B cell (primary cell): ENCODE measurements at regions of chr9 and their contacts with region 1.

Region 1: GRCh38 chr9:89278997-89279739 is 31.8 kb upstream of the CKS2 start:
- DNase-seq: peak; percentile 47
- ATAC-seq: peak; percentile 24
- H3K4me3 ChIP-seq: no peak overlapping the region
- H3K4me3 Mint-ChIP-seq: no peak overlapping the region
- H3K27ac ChIP-seq: no peak overlapping the region
- H3K27ac Mint-ChIP-seq: no peak overlapping the region
- H3K4me1 ChIP-seq: no peaks in the 10 kb centered on the region
- H3K4me1 Mint-ChIP-seq: no peaks in the 10 kb centered on the region
- H3K27me3 ChIP-seq: no peaks in the 10 kb centered on the region
- H3K27me3 Mint-ChIP-seq: peaks cover 4% of the 10 kb centered on the region
- CTCF ChIP-seq: peak; percentile 79

Region 2: GRCh38 chr9:88593537-88594185 is 685.5 kb before region 1 on chr9:
- CTCF ChIA-PET with region 1: interaction called, 4 read pairs
- POLR2A ChIA-PET with region 1: no interaction called
- intact Hi-C with region 1: loop called (anchors 5 kb)
- DNase-seq: peak; percentile 64
- ATAC-seq: no peak
- H3K4me3 ChIP-seq: no peak overlapping the region
- H3K4me3 Mint-ChIP-seq: no peak overlapping the region
- H3K27ac ChIP-seq: no peak overlapping the region
- H3K27ac Mint-ChIP-seq: no peak overlapping the region
- H3K4me1 ChIP-seq: peaks cover 9 to 13% of the 10 kb centered on the region in 2 donors
- H3K4me1 Mint-ChIP-seq: peaks cover 11% of the 10 kb centered on the region
- H3K27me3 ChIP-seq: peaks cover 0 to 2% (median 0%) of the 10 kb centered on the region in 4 experiments
- H3K27me3 Mint-ChIP-seq: peaks cover 8% of the 10 kb centered on the region
- CTCF ChIP-seq: peak; percentile 67

Region 3: GRCh38 chr9:89234205-89235067 is 44.7 kb before region 1 on chr9:
- CTCF ChIA-PET with region 1: no interaction called
- POLR2A ChIA-PET with region 1: no interaction called
- intact Hi-C with region 1: no loop called
- DNase-seq: peak; percentile 21
- ATAC-seq: no peak
- H3K4me3 ChIP-seq: no peak overlapping the region
- H3K4me3 Mint-ChIP-seq: no peak overlapping the region
- H3K27ac ChIP-seq: no peak overlapping the region
- H3K27ac Mint-ChIP-seq: no peak overlapping the region
- H3K4me1 ChIP-seq: peaks cover 0 to 6% of the 10 kb centered on the region in 2 donors
- H3K4me1 Mint-ChIP-seq: peaks cover 11% of the 10 kb centered on the region
- H3K27me3 ChIP-seq: peaks cover 0 to 21% (median 9%) of the 10 kb centered on the region in 4 experiments
- H3K27me3 Mint-ChIP-seq: peaks cover 51% of the 10 kb centered on the region
- CTCF ChIP-seq: no peak